ENCODE measurements at regions of chr5 and their contacts with region 1.

Region 1: GRCh38 chr5:147661541-147661940 is 121.0 kb downstream of the JAKMIP2 start:
- DNase-seq: no peak
- ATAC-seq: no peak
- H3K4me3 ChIP-seq: no peak overlapping the region
- H3K27ac ChIP-seq: no peak overlapping the region
- H3K4me1 ChIP-seq: no peaks in the 10 kb centered on the region
- H3K27me3 ChIP-seq: no peaks in the 10 kb centered on the region
- CTCF ChIP-seq: no peak
- POLR2A ChIP-seq: no peak

Region 2: GRCh38 chr5:147712598-147712997 is 51.1 kb after region 1 on chr5:
- intact Hi-C with region 1: no loop called
- DNase-seq: no peak
- ATAC-seq: no peak
- H3K4me3 ChIP-seq: no peak overlapping the region
- H3K27ac ChIP-seq: no peak overlapping the region
- H3K4me1 ChIP-seq: no peaks in the 10 kb centered on the region
- H3K27me3 ChIP-seq: no peaks in the 10 kb centered on the region
- CTCF ChIP-seq: no peak
- POLR2A ChIP-seq: no peak

Region 3: DNA sequence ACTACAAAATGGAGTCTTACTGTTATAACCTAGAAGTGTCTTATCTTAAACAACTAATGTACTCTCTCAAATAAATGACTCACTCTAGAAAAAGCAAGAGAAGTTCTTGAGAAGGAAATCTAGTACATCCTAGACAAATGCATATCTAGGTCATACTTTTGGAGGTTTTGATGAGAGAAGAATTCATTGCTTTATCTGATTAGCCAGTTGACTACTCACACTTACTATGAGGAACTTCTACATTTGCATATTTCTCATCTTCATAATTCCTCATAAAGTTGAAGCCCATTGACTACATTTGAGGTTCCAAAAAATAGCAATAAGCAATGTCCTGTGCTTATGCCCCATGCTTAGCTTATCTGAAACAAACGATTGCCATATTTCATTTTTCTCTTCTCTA is 118.2 kb after region 1 on chr5:
- intact Hi-C with region 1: loop called in 1 of 10 experiments (anchors 10 kb)
- DNase-seq: no peak
- ATAC-seq: no peak
- H3K4me3 ChIP-seq: no peak overlapping the region
- H3K27ac ChIP-seq: no peak overlapping the region
- H3K4me1 ChIP-seq: peaks cover 0 to 7% (median 0%) of the 10 kb centered on the region in 12 donors
- H3K27me3 ChIP-seq: peaks cover 0 to 31% (median 6%) of the 10 kb centered on the region in 9 donors
- CTCF ChIP-seq: no peak
- POLR2A ChIP-seq: no peak